ENCODE measurements at regions of chr17 and their contacts with region 1.

Region 1: DNA sequence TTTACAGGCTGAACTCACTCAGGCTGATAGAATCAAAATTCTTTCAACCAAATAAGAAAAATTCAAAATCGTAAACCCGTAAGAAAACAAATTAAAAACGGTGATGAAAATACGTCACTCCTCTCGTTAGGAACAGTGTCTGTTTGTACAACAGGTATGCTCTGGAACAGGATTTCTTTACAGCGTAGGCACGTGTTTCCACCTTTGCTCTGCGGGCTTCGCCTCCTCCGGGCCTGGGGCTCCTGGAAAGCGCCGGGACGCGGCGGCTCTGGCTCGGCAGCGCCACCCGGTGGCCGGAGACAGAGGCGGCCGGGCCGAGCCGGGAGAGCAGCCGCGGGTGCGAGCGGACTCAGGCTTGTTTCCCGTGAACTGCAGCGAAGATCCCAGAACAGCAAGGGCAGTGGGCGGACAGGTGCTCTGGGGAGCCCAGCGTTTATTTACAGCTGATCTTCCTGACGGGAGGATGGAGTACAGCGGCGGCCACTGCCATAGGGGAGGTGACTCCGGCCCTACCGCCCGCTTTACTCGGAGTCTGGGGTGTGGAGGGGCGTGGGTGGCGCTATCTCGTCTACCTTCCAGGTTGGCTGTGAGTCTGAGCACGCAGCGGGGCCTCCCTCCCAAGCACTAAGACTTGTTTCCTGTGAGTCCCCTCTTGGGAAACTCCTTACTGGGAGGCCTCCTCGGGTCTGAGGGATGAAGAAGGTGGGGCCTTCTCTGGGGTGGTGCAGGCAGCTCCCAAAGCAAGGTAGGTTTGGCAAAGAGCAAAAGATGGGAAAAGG is 40.5 kb upstream of the ATP2A3 start:
- DNase-seq: no peak
- H3K4me3 ChIP-seq: no peak overlapping the region
- H3K27ac ChIP-seq: no peak overlapping the region
- H3K4me1 ChIP-seq: no peaks in the 10 kb centered on the region
- H3K27me3 ChIP-seq: no peaks in the 10 kb centered on the region
- CTCF ChIP-seq: peak; percentile 54 to 87 (median 75)
- POLR2A ChIP-seq: no peak

Region 2: GRCh38 chr17:3965118-3965803 is 39.4 kb before region 1 on chr17:
- intact Hi-C with region 1: loop called (anchors 5 kb)
- DNase-seq: peak in 1 of 2 donors; percentile 43
- H3K4me3 ChIP-seq: peak overlapping the region; percentile 42 to 69 (median 62)
- H3K27ac ChIP-seq: peak overlapping the region in 1 of 2 donors; percentile 66
- H3K4me1 ChIP-seq: peaks cover 0 to 7% of the 10 kb centered on the region in 2 donors
- H3K27me3 ChIP-seq: peaks cover 0 to 9% of the 10 kb centered on the region in 2 donors
- CTCF ChIP-seq: no peak
- POLR2A ChIP-seq: no peak

Region 3: GRCh38 chr17:4017377-4017776 is 12.7 kb after region 1 on chr17:
- intact Hi-C with region 1: no loop called
- DNase-seq: no peak
- H3K4me3 ChIP-seq: no peak overlapping the region
- H3K27ac ChIP-seq: no peak overlapping the region
- H3K4me1 ChIP-seq: no peaks in the 10 kb centered on the region
- H3K27me3 ChIP-seq: no peaks in the 10 kb centered on the region
- CTCF ChIP-seq: no peak
- POLR2A ChIP-seq: no peak

Region 4: DNA sequence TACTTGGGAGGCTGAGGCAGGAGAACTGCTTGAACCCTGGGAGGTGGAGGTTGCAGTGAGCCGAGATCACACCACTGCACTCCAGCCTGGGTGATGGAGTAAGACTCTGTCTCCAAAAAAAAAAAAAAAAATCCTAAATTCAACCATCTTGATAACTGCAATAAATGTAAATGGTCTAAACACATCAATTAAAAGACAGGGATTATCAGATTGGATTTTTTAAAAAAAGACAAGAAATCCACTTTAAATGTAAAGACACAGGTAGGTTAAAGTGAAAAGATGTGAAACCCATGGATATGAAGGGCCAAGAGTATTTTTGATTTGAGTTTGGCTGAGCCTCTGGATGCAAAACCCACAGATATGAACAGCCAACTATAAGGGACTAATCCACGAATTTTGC is 23.7 kb after region 1 on chr17:
- intact Hi-C with region 1: no loop called
- DNase-seq: no peak
- H3K4me3 ChIP-seq: no peak overlapping the region
- H3K27ac ChIP-seq: no peak overlapping the region
- H3K4me1 ChIP-seq: no peaks in the 10 kb centered on the region
- H3K27me3 ChIP-seq: no peaks in the 10 kb centered on the region
- CTCF ChIP-seq: no peak
- POLR2A ChIP-seq: no peak